Activated T-helper 1 cell treated with anti-CD3 and anti-CD28 coated beads, Interleukin-12 subunit alpha, Interleukin-12 subunit beta, Interleukin-2, Interleukin-4 antibody, amounts not matched to agents 30 ng/mL and 10 ng/mL and 1 ng/mL, durations not matched to agents 14 hours and 24 hours and 36 hours (primary cell): ENCODE measurements at regions of chr12 and their contacts with region 1.

Region 1: GRCh38 chr12:1594261-1595025 is at the start of gene FBXL14:
- DNase-seq: peak; percentile 88
- H3K4me3 Mint-ChIP-seq: peak within 1 kb of the TSS; percentile 99
- H3K27ac Mint-ChIP-seq: peak within 1 kb of the TSS; percentile 94
- H3K4me1 Mint-ChIP-seq: peaks cover 48% of the 10 kb centered on the region
- H3K27me3 Mint-ChIP-seq: no peaks in the 10 kb centered on the region
- total RNA-seq, gene FBXL14: 19.4 and 20.4 TPM in 2 replicates

Region 2: GRCh38 chr12:459430-460258 is 1134.8 kb before region 1 on chr12 and contains the start of gene B4GALNT3:
- intact Hi-C with region 1: loop called (anchors 10 kb)
- DNase-seq: peak; percentile 25
- H3K4me3 Mint-ChIP-seq: peak within 1 kb of the TSS; percentile 88
- H3K27ac Mint-ChIP-seq: no peak within 1 kb of the TSS
- H3K4me1 Mint-ChIP-seq: peaks cover 11% of the 10 kb centered on the region
- H3K27me3 Mint-ChIP-seq: peaks cover 73% of the 10 kb centered on the region
- total RNA-seq, gene B4GALNT3: 7.6 and 8.6 TPM in 2 replicates

Region 3: GRCh38 chr12:662566-663292 is 931.7 kb before region 1 on chr12:
- intact Hi-C with region 1: loop called (anchors 5 kb)
- DNase-seq: no peak
- H3K4me3 Mint-ChIP-seq: peak overlapping the region; percentile 69
- H3K27ac Mint-ChIP-seq: peak overlapping the region; percentile 78
- H3K4me1 Mint-ChIP-seq: peaks cover 56% of the 10 kb centered on the region
- H3K27me3 Mint-ChIP-seq: no peaks in the 10 kb centered on the region

Region 4: GRCh38 chr12:1117970-1118563 is 476.4 kb before region 1 on chr12:
- intact Hi-C with region 1: loop called (anchors 1 kb)
- DNase-seq: peak; percentile 52
- H3K4me3 Mint-ChIP-seq: no peak overlapping the region
- H3K27ac Mint-ChIP-seq: no peak overlapping the region
- H3K4me1 Mint-ChIP-seq: peaks cover 6% of the 10 kb centered on the region
- H3K27me3 Mint-ChIP-seq: no peaks in the 10 kb centered on the region

Region 5: GRCh38 chr12:1583421-1584078 is 10.9 kb before region 1 on chr12:
- intact Hi-C with region 1: loop called (anchors 1 kb)
- DNase-seq: peak; percentile 58
- H3K4me3 Mint-ChIP-seq: no peak overlapping the region
- H3K27ac Mint-ChIP-seq: no peak overlapping the region
- H3K4me1 Mint-ChIP-seq: peaks cover 23% of the 10 kb centered on the region
- H3K27me3 Mint-ChIP-seq: peaks cover 5% of the 10 kb centered on the region

Region 6: DNA sequence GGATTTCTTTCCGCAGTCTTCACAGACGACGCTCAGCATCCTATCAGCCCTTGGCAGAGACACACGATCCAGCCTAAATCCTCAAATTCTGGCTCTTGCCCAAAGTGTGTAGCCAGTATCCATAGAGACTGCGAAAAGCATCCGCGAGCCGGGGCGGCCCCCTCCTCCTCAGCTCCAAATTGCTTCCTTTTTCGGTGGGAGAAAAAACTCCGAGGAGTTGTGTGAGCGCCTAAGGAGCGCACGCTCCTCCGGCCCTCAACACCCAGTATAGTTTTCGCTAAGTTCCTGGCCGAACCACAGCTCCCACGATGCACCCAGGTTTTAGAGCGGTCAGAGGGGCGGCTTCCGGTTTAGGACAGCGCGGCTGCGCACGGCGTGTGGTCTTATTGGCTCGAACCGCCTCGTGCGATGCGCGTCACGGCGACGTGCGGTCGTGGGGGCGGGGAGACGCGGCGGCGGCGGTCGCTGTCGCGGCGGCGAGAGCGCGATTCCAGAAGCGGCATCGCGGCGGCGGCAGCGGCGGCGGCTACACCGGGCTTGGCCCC is 96.2 kb after region 1 on chr12 and contains the start of gene ADIPOR2:
- intact Hi-C with region 1: loop called (anchors 5 kb)
- DNase-seq: peak; percentile 93
- H3K4me3 Mint-ChIP-seq: peak within 1 kb of the TSS; percentile 99
- H3K27ac Mint-ChIP-seq: peak within 1 kb of the TSS; percentile 96
- H3K4me1 Mint-ChIP-seq: peaks cover 50% of the 10 kb centered on the region
- H3K27me3 Mint-ChIP-seq: peaks cover 3% of the 10 kb centered on the region
- total RNA-seq, gene ADIPOR2: 69.4 and 75.2 TPM in 2 replicates

Region 7: DNA sequence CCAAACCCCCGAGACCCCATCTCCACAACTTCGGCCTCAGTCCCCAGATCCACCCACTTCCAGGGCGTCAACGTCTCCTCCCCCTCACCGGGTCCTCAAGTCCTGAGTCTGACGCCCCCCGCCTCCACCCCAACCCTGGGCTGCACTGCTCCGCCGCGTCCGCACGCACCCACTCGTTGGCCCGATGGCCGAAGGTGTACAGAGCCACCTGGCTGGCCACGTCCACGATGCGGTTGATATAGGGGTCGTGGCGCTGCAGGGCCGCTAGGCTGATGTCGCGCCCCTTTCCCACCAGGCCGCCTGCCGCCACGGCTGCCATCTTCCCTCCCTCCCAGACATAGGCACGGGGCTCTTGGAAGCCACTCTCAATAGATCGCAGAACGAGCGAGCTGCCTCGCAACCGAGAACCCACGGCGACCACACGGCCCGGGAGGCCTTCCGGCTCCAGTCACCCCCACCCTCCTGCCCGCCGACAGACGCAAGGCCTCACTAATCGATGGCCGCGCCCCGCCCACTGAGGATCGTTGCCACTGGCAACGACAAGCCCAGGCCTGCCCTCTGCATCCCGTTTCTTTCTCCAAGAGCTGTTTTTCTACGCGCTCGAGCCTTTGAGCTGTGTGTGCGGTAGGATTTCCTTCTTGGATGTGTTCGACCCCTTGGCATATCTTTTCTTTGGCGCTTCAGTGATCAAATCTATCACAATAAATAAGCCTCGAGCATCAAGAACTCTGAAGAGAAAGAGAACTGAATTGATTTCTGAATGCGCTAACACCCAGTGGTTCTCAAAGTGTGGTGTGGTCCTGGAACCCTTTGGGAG is 409.9 kb after region 1 on chr12 and contains the start of gene DCP1B:
- intact Hi-C with region 1: loop called (anchors 1 kb)
- DNase-seq: peak; percentile 93
- H3K4me3 Mint-ChIP-seq: peak within 1 kb of the TSS; percentile 97
- H3K27ac Mint-ChIP-seq: peak within 1 kb of the TSS; percentile 95
- H3K4me1 Mint-ChIP-seq: peaks cover 31% of the 10 kb centered on the region
- H3K27me3 Mint-ChIP-seq: peaks cover 3% of the 10 kb centered on the region
- total RNA-seq, gene DCP1B: 8.8 and 9.8 TPM in 2 replicates